Dendritic cell treated with granulocyte-macrophage colony-stimulating factor and Interleukin-4, amounts not matched to agents 40 ng/mL and 50 ng/mL, for 4 days (primary cell): ENCODE measurements at regions of chr10 and their contacts with region 1.

Region 1: DNA sequence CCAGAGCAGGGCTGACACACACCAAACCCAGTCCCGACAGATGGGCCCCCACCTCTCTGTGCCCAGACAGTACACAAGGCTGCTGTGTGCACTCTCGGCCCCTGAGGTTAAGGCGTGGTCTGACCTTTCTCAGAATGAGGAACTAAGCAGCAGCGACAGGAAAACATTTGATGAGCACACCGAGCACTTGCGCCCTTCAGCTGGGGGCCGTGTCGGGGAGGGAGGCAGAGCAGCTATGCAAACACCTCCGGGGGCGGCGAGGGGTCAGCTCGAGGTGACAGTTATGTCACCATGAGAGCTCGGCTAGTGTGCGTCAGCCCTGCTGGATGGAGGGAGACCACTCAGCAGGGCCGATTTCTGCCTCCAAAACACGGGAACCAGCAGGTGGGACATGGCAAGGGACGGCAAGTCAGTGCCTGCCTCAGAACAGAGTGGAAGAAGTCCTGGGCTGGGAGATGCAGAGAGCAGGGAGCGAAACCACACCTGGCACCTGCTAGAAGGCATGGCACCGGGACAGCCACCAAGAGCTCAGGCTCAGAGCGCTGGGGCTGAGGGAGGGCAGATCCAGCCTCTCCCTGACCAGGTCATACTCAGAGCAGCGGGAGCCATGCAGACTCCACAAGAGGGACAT is 57.4 kb downstream of the CHST15 start:
- H3K4me3 Mint-ChIP-seq: peak overlapping the region; percentile 58
- H3K27ac Mint-ChIP-seq: peak overlapping the region; percentile 73
- H3K4me1 Mint-ChIP-seq: peaks cover 70% of the 10 kb centered on the region
- H3K27me3 Mint-ChIP-seq: peaks cover 3% of the 10 kb centered on the region

Region 2: DNA sequence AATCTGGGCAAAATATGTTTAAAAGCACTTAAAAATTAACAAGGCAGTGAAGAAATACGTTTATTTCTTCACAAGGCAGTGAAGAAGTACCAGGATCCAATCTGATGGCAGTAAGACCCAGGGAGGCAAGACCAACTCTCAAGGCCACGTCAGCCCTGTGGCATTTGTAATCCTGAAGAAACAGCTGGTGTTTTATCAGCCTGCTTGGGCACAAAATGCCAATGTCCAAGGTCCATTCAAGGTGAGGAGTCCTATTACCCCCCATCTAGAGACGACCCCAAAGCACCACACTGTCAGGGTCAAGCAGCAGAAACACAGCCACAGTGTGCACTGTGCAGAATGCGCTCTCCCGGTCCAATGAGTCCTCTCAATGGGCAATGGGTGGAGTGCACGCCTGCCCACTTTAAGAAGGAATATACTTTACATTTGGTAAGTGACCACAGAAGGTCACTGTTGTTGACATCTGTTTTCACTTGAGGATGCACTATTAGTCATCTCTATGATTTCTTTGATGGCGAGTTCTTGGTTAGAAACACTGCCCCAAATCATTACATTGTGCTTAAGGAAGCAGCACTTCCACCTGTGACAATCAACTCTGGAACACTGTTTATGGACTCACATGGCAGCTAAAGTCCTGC is 157.3 kb before region 1 on chr10:
- intact Hi-C with region 1: no loop called
- H3K4me3 Mint-ChIP-seq: no peak overlapping the region
- H3K27ac Mint-ChIP-seq: no peak overlapping the region
- H3K4me1 Mint-ChIP-seq: no peaks in the 10 kb centered on the region
- H3K27me3 Mint-ChIP-seq: no peaks in the 10 kb centered on the region

Region 3: DNA sequence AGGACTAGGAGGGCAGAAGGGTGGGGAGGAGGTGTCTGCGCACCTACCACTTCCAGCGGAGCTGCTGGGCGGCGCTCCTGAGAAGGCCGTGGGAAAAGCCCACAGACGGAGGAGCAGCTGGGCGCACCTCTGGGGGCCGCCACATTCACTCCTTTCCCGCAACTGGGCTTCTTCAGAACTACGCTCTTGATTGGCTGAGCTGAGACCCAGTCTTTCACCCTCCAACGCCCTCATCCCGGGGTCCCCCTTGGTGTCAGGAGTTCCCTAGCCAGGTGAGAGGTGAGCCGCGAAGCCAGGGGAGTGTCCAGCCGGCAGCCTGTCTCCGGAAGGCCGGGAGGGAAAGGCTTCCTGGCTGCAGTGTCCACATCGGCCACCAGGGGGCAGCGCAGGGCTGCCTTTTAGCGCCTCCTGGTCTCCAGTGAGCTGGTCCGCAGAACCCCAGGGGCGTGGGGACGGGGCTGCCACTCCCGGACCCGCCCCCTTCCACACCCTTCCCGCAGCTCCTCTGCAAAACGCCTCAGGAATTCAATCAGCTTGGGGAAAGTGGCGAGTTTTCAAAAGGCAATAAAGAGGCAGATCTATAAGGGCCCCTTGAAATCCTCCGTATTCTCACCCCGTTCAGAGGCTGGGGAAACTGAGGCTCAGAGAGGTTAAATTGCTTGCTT is 41.5 kb before region 1 on chr10:
- intact Hi-C with region 1: loop called (anchors 5 kb)
- H3K4me3 Mint-ChIP-seq: peak overlapping the region; percentile 56
- H3K27ac Mint-ChIP-seq: peak overlapping the region; percentile 71
- H3K4me1 Mint-ChIP-seq: peaks cover 65% of the 10 kb centered on the region
- H3K27me3 Mint-ChIP-seq: peaks cover 55% of the 10 kb centered on the region

Region 4: DNA sequence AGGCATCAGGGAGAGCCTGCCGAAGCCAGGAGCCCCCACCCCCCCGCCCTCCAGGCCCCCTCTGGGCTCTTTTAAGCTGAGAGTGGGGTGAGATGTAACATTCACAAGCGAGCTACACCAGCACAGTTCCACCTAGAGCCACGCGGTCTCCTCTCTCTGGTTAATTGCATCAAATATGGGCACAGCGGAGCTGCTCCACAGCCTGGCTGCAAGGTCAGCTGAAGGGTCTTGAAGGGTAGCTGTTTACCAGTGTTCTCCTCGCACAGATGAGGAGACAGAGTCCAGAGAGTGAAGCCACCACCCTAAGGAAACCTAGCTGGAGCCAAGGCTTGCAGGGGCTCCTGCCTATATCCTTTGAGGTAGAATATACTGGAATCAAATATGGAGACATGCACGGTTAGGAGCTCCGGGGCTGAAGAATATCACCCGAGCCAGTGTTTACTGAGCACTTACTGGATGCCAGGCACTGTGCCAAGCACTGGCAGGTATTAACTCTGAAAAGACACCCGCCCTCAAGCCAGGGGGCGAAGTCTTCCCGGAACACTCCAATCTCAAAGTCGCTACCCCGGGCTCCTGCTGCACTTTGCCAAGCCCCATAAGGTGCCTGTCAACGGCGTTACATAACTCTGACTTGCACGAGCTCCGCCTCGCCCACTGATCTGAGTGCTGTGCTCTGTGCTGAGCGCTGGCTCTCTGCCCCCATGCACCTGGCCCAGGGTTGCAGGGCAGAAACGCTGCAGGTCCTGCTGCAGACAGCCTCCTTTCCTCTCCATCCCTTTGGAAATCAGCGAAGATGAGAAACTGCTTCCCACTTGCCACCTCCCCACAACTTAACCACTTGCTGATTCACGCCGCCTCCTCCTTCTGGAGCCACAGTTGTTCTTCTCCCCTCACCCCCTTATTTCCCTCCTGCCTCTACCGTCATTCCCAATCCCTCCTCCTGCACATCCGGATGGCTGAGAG is 51.9 kb after region 1 on chr10:
- intact Hi-C with region 1: loop called (anchors 5 kb)
- H3K4me3 Mint-ChIP-seq: no peak overlapping the region
- H3K27ac Mint-ChIP-seq: no peak overlapping the region
- H3K4me1 Mint-ChIP-seq: peaks cover 90% of the 10 kb centered on the region
- H3K27me3 Mint-ChIP-seq: peaks cover 66% of the 10 kb centered on the region

Region 5: DNA sequence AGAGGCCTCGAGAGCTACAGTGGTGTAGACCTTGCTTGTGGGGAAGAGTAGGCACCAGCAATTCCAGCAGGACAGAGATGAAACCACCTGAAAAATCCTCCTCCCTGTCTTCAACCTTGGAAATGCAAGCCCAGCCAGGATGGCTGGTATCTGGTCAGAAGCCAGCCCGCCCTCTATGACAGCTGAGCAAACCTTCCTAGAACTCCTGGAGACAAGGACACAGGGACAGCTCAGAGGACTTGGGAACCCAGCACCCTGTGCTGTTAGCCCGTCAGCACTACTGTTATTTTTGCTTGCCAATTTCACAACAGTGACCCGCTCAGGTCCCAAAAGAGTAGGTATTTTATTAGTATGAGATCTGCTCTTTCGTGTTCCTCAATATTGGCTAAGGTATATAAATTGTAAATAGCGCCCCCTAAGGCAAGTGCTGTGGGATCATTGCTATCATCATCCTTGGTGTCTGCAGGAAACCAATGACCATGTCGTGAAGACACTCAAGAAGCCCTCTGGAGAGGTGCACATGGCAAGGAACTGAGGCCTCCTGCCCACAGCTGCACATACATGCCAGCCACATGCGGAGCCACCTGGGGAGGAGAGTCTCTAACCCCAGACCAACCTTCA is 213.9 kb after region 1 on chr10:
- intact Hi-C with region 1: loop called (anchors 5 kb)
- H3K4me3 Mint-ChIP-seq: no peak overlapping the region
- H3K27ac Mint-ChIP-seq: no peak overlapping the region
- H3K4me1 Mint-ChIP-seq: peaks cover 55% of the 10 kb centered on the region
- H3K27me3 Mint-ChIP-seq: peaks cover 3% of the 10 kb centered on the region

Region 6: GRCh38 chr10:124306922-124307371 is 270.9 kb after region 1 on chr10:
- intact Hi-C with region 1: loop called (anchors 5 kb)
- H3K4me3 Mint-ChIP-seq: no peak overlapping the region
- H3K27ac Mint-ChIP-seq: peak overlapping the region; percentile 84
- H3K4me1 Mint-ChIP-seq: peaks cover 25% of the 10 kb centered on the region
- H3K27me3 Mint-ChIP-seq: no peaks in the 10 kb centered on the region